Heart right ventricle (tissue), 16 donors: ENCODE measurements at regions of chr7 and their contacts with region 1.

Region 1: DNA sequence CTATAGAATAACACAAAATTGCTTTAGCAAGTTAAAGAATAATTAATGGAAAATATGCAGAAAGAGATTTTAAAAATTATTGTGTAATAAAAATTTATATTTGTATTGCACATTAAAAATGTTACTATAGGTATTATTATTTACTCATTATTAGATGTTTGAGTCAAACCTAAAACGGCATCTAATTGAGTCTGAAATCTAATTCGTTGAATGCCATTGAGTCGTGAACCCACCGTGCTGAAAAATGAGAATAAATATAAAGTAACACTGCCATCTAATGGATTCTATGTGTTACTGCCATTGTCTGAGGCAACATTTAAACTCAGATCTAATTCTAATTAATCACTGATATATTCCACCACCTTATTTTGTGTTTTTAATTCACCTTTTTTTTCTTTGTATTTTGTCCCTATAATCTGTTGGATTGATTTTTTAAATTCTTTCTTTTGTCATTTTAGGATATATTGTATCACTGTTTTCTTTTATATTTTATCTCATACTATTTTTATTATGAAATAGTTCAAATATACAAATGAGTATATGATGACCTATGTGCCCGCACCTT is 62.2 kb downstream of the SAMD9 start:
- DNase-seq: no peak
- ATAC-seq: peak in 4 of 8 donors; percentile 33 to 58 (median 46)
- H3K4me3 ChIP-seq: no peak overlapping the region
- H3K27ac ChIP-seq: no peak overlapping the region
- H3K4me1 ChIP-seq: peaks cover 0 to 14% (median 0%) of the 10 kb centered on the region in 9 donors
- H3K27me3 ChIP-seq: peaks cover 0 to 3% (median 0%) of the 10 kb centered on the region in 7 donors
- CTCF ChIP-seq: peak; percentile 56 to 90 (median 80)

Region 2: DNA sequence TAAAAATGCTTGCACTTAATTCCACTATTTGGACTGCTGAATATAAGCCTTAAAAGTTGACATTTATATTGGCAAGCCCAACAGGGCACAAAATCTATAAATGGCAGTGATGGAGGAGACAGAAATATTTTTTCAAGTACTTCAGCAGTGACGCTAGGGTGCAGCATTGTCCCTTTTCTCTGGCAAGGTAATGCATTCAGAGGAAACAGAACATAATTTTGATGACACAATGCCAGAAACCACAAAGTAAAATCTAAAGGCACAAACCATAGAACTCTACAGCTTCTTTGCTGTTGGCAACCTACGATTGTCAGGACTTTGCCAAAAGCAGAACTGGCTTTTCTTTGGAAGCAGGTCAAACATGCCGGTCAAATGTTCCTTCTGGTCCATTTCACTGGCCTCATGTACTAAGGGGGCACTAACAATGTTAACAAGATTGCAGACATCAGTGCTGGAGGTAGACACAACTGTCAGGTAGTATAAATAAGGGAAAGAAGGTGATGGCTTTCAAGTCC is 434.5 kb before region 1 on chr7:
- intact Hi-C with region 1: loop called (anchors 2 to 10 kb)
- DNase-seq: peak; percentile 24 to 74
- ATAC-seq: peak; percentile 86 to 90 (median 88)
- H3K4me3 ChIP-seq: no peak overlapping the region
- H3K27ac ChIP-seq: peak overlapping the region in 5 of 10 donors; percentile 8 to 58 (median 41)
- H3K4me1 ChIP-seq: peaks cover 3 to 29% (median 14%) of the 10 kb centered on the region in 9 donors
- H3K27me3 ChIP-seq: no peaks in the 10 kb centered on the region
- CTCF ChIP-seq: peak; percentile 60 to 86 (median 78)

Region 3: GRCh38 chr7:92691578-92691977 is 364.0 kb before region 1 on chr7:
- intact Hi-C with region 1: loop called in 4 of 10 experiments (anchors 5 to 10 kb)
- DNase-seq: no peak
- ATAC-seq: peak in 1 of 8 donors; percentile 47
- H3K4me3 ChIP-seq: no peak overlapping the region
- H3K27ac ChIP-seq: no peak overlapping the region
- H3K4me1 ChIP-seq: peaks cover 0 to 29% (median 16%) of the 10 kb centered on the region in 9 donors
- H3K27me3 ChIP-seq: no peaks in the 10 kb centered on the region
- CTCF ChIP-seq: peak; percentile 31 to 71 (median 54)

Region 4: GRCh38 chr7:92843034-92843760 is 212.4 kb before region 1 on chr7:
- intact Hi-C with region 1: loop called in 2 of 10 experiments (anchors 5 to 10 kb)
- DNase-seq: no peak
- ATAC-seq: no peak
- H3K4me3 ChIP-seq: no peak overlapping the region
- H3K27ac ChIP-seq: no peak overlapping the region
- H3K4me1 ChIP-seq: no peaks in the 10 kb centered on the region
- H3K27me3 ChIP-seq: no peaks in the 10 kb centered on the region
- CTCF ChIP-seq: no peak

Region 5: DNA sequence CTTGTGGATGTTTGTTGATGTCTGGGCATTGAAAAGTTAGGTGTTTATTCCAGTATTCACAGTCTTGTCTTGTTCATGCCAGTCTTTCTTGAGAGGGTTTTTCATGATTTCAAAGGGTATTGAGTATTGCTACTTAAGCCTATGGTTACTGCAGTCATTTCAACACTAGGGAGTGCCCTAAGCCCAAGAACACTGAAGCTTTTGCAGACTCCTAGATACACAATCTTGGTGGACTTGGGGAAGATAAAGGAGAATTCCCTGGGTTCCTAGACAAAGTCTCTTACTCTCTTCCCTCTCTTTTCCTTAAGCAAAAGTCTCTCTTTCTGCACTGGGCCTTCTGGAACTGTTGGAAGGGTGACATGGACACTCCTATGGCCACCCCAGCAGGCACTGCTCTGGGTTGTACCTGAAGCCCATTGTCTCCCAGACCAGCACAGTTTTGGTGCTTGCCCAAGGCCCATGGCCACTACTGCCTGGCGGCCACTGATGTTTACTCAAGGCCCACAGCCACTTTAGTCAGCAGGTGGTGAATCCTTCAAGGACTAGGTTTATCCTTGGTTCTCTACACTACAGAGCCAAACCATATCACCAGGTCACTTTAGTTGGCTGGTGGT is 37.2 kb after region 1 on chr7:
- intact Hi-C with region 1: no loop called
- DNase-seq: no peak
- ATAC-seq: no peak
- H3K4me3 ChIP-seq: no peak overlapping the region
- H3K27ac ChIP-seq: no peak overlapping the region
- H3K4me1 ChIP-seq: no peaks in the 10 kb centered on the region
- H3K27me3 ChIP-seq: no peaks in the 10 kb centered on the region
- CTCF ChIP-seq: peak in 1 of 9 donors; percentile 23

Region 6: GRCh38 chr7:93298671-93299070 is 243.0 kb after region 1 on chr7:
- intact Hi-C with region 1: no loop called
- DNase-seq: no peak
- ATAC-seq: no peak
- H3K4me3 ChIP-seq: no peak overlapping the region
- H3K27ac ChIP-seq: no peak overlapping the region
- H3K4me1 ChIP-seq: no peaks in the 10 kb centered on the region
- H3K27me3 ChIP-seq: no peaks in the 10 kb centered on the region
- CTCF ChIP-seq: no peak

Region 7: GRCh38 chr7:93601363-93601762 is 545.7 kb after region 1 on chr7:
- intact Hi-C with region 1: no loop called
- DNase-seq: no peak
- ATAC-seq: no peak
- H3K4me3 ChIP-seq: no peak overlapping the region
- H3K27ac ChIP-seq: no peak overlapping the region
- H3K4me1 ChIP-seq: no peaks in the 10 kb centered on the region
- H3K27me3 ChIP-seq: no peaks in the 10 kb centered on the region
- CTCF ChIP-seq: no peak